ENCODE measurements at regions of chr10 and their contacts with region 1.

Region 1: GRCh38 chr10:61835069-61835945 is 66.2 kb upstream of the ARID5B start:
- DNase-seq: peak; percentile 96
- ATAC-seq: peak; percentile 34
- H3K4me3 ChIP-seq: peak overlapping the region; percentile 25
- H3K27ac ChIP-seq: peak overlapping the region; percentile 66
- H3K4me1 ChIP-seq: peaks cover 50% of the 10 kb centered on the region
- H3K27me3 ChIP-seq: no peaks in the 10 kb centered on the region
- CTCF ChIP-seq: peak; percentile 99

Region 2: GRCh38 chr10:61475449-61475873 is 359.8 kb before region 1 on chr10:
- CTCF ChIA-PET with region 1: no interaction called
- POLR2A ChIA-PET with region 1: interaction called, 8 read pairs
- intact Hi-C with region 1: loop called (anchors 5 kb)
- DNase-seq: peak; percentile 98
- ATAC-seq: peak; percentile 41
- H3K4me3 ChIP-seq: no peak overlapping the region
- H3K27ac ChIP-seq: no peak overlapping the region
- H3K4me1 ChIP-seq: peaks cover 36% of the 10 kb centered on the region
- H3K27me3 ChIP-seq: no peaks in the 10 kb centered on the region
- CTCF ChIP-seq: no peak

Region 3: GRCh38 chr10:61592581-61592980 is 242.7 kb before region 1 on chr10:
- CTCF ChIA-PET with region 1: no interaction called
- POLR2A ChIA-PET with region 1: no interaction called
- intact Hi-C with region 1: no loop called
- DNase-seq: peak; percentile 91
- ATAC-seq: peak; percentile 83
- H3K4me3 ChIP-seq: no peak overlapping the region
- H3K27ac ChIP-seq: no peak overlapping the region
- H3K4me1 ChIP-seq: peaks cover 18% of the 10 kb centered on the region
- H3K27me3 ChIP-seq: no peaks in the 10 kb centered on the region; the same call in 1 of the 2 replicates
- CTCF ChIP-seq: peak; percentile 100

Region 4: GRCh38 chr10:61733358-61733940 is 101.9 kb before region 1 on chr10:
- CTCF ChIA-PET with region 1: interaction called, 3 read pairs
- POLR2A ChIA-PET with region 1: no interaction called
- intact Hi-C with region 1: loop called (anchors 1 kb)
- DNase-seq: peak; percentile 96
- ATAC-seq: peak; percentile 88
- H3K4me3 ChIP-seq: no peak overlapping the region
- H3K27ac ChIP-seq: no peak overlapping the region
- H3K4me1 ChIP-seq: no peaks in the 10 kb centered on the region
- H3K27me3 ChIP-seq: 0 out of 2 replicates have a peak, but pooled peaks cover 7% of the 10 kb centered on the region
- CTCF ChIP-seq: peak; percentile 100

Region 5: GRCh38 chr10:61847087-61847486 is 11.8 kb after region 1 on chr10:
- CTCF ChIA-PET with region 1: interaction called, 8 read pairs
- POLR2A ChIA-PET with region 1: no interaction called
- intact Hi-C with region 1: loop called (anchors 1 kb)
- DNase-seq: no peak
- ATAC-seq: no peak
- H3K4me3 ChIP-seq: no peak overlapping the region
- H3K27ac ChIP-seq: no peak overlapping the region
- H3K4me1 ChIP-seq: peaks cover 38% of the 10 kb centered on the region
- H3K27me3 ChIP-seq: no peaks in the 10 kb centered on the region
- CTCF ChIP-seq: no peak

Region 6: DNA sequence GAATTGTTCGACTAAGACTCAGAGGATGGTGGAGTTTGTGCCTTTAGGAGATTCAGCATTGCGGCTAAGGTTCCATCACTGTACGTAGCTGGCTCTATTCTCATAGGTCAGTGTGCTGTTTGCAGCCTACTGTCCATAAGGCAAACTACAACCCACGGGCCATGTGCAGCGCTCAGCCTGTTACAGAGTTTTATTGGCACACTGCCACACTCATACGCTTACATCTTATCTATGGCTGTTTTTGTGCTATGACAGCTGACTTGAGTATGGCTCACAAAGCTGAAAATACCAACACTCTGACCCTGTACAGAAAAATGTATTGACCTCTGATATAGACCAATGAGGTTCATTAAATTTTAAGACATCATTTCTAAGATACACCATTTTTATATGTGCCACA is 180.7 kb after region 1 on chr10:
- CTCF ChIA-PET with region 1: no interaction called
- POLR2A ChIA-PET with region 1: no interaction called
- intact Hi-C with region 1: no loop called
- DNase-seq: no peak
- ATAC-seq: no peak
- H3K4me3 ChIP-seq: no peak overlapping the region
- H3K27ac ChIP-seq: no peak overlapping the region
- H3K4me1 ChIP-seq: peaks cover 10% of the 10 kb centered on the region; the same call in 1 of the 2 replicates
- H3K27me3 ChIP-seq: no peaks in the 10 kb centered on the region
- CTCF ChIP-seq: no peak

Region 7: DNA sequence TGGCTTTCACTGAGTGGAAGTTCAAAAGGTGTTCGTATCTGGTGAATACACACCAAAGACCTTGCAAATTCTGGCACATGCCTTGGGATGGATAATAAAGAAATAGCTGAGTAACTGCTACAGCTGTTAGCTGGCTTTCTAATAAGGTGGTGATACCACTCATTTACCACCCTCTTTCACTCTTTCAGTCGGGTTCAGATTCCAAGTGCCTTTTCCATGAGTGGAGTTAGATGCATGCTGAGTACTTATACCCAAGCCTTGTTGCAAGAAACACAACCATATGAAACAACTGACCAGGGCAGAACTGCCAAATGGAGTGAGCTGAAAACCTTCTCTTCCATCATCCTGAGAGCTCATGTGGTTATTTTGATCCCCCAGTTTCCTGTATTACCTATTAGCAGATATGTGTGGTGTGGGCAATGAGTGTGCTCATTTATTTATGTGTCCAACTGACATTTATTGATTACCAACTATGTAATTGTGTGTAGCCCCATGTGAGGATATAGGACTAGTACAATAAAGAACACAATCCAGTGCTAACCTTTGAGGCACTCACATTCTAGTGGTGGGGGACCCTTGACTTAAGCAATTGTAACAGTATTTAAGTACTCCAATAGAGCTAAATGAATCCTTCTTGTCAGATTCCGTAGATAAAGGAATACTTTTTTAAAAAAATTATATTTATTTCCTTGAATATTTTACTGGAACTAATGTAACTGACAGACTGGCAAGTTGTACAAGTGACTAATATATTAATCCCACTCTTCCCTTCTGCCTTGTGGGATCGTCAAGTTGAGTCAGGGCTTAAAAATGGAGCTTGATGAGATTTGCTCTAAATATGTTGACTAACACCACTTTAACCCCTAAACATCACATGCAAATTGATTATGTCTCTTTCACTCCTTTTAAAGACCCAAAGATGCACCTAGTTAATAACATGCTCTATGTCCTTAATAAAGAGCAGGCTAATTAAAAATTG is 190.9 kb after region 1 on chr10:
- CTCF ChIA-PET with region 1: interaction called, 3 read pairs
- POLR2A ChIA-PET with region 1: interaction called, 7 read pairs
- intact Hi-C with region 1: loop called (anchors 2 kb)
- DNase-seq: peak; percentile 99
- ATAC-seq: peak; percentile 37
- H3K4me3 ChIP-seq: no peak overlapping the region
- H3K27ac ChIP-seq: peak overlapping the region; percentile 86
- H3K4me1 ChIP-seq: peaks cover 77% of the 10 kb centered on the region
- H3K27me3 ChIP-seq: no peaks in the 10 kb centered on the region
- CTCF ChIP-seq: no peak

Measured in PC-3 (cell line).